ENCODE measurements at regions of chr10 and their contacts with region 1.

Region 1: GRCh38 chr10:61903221-61903927 is 1.9 kb downstream of the ARID5B start:
- DNase-seq: peak; percentile 67 to 78 (median 70)
- H3K4me3 ChIP-seq: peak overlapping the region; percentile 63 to 88
- H3K4me3 Mint-ChIP-seq: peak overlapping the region; percentile 86 to 96 (median 94)
- H3K27ac ChIP-seq: peak overlapping the region; percentile 80
- H3K27ac Mint-ChIP-seq: peak overlapping the region; percentile 84 to 98 (median 97)
- H3K4me1 ChIP-seq: peaks cover 51% of the 10 kb centered on the region
- H3K4me1 Mint-ChIP-seq: peaks cover 28 to 63% (median 40%) of the 10 kb centered on the region in 4 donors
- H3K27me3 ChIP-seq: no peaks in the 10 kb centered on the region
- H3K27me3 Mint-ChIP-seq: no peaks in the 10 kb centered on the region

Region 2: GRCh38 chr10:61662794-61663259 is 240.5 kb before region 1 on chr10 and contains the start of gene CABCOCO1:
- CTCF ChIA-PET with region 1: no interaction called
- POLR2A ChIA-PET with region 1: no interaction called
- intact Hi-C with region 1: no loop called
- DNase-seq: no peak
- H3K4me3 ChIP-seq: no peak within 1 kb of the TSS
- H3K4me3 Mint-ChIP-seq: peak within 1 kb of the TSS in 2 of 8 donors; percentile 8 to 58
- H3K27ac ChIP-seq: no peak within 1 kb of the TSS
- H3K27ac Mint-ChIP-seq: no peak within 1 kb of the TSS
- H3K4me1 ChIP-seq: no peaks in the 10 kb centered on the region
- H3K4me1 Mint-ChIP-seq: peaks cover 0 to 5% (median 0%) of the 10 kb centered on the region in 4 donors
- H3K27me3 ChIP-seq: peaks cover 6% of the 10 kb centered on the region
- H3K27me3 Mint-ChIP-seq: peaks cover 30 to 35% of the 10 kb centered on the region in 2 donors
- total RNA-seq, gene CABCOCO1: not detected

Region 3: DNA sequence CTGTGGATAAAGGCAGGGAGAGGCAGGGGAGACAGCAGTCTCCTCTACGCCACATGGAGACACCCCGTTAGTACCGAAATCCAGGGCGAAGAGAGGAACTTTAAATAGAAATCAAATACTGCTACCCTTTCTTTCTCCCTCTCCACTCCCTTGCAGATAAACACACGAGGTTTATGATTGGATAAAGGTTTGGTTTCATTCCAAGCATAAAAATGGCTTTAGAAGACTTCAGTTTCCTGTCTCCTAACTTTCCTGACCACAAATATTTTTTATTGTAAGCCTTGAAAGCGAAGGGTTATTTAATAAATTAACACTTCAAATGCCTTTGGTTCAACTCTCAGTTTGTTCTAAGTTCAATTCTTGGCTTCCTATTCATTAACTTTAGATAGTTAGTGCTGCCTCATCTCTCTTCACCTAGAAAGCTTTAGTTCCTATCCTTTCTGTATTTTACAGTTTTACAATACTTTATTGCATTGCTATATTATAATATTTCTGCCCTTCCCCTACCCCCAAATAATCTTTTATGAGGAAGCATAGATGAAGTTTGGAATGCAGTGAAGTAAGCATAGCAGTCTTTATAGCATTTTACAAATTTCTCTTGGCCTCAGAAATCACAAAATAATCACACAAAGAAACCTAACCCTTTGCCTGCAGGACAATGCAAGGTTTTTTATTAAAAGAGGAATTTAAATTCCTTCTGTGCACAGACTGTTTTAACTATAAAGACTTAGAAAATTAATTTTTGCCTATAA is 33.4 kb before region 1 on chr10:
- CTCF ChIA-PET with region 1: interaction called, 25 read pairs
- POLR2A ChIA-PET with region 1: interaction called, 21 read pairs
- intact Hi-C with region 1: loop called (anchors 1 kb)
- DNase-seq: no peak
- H3K4me3 ChIP-seq: no peak overlapping the region
- H3K4me3 Mint-ChIP-seq: peak overlapping the region in 1 of 8 donors; percentile 28
- H3K27ac ChIP-seq: no peak overlapping the region
- H3K27ac Mint-ChIP-seq: no peak overlapping the region
- H3K4me1 ChIP-seq: peaks cover 4% of the 10 kb centered on the region
- H3K4me1 Mint-ChIP-seq: peaks cover 0 to 9% (median 3%) of the 10 kb centered on the region in 4 donors
- H3K27me3 ChIP-seq: no peaks in the 10 kb centered on the region
- H3K27me3 Mint-ChIP-seq: no peaks in the 10 kb centered on the region

Region 4: DNA sequence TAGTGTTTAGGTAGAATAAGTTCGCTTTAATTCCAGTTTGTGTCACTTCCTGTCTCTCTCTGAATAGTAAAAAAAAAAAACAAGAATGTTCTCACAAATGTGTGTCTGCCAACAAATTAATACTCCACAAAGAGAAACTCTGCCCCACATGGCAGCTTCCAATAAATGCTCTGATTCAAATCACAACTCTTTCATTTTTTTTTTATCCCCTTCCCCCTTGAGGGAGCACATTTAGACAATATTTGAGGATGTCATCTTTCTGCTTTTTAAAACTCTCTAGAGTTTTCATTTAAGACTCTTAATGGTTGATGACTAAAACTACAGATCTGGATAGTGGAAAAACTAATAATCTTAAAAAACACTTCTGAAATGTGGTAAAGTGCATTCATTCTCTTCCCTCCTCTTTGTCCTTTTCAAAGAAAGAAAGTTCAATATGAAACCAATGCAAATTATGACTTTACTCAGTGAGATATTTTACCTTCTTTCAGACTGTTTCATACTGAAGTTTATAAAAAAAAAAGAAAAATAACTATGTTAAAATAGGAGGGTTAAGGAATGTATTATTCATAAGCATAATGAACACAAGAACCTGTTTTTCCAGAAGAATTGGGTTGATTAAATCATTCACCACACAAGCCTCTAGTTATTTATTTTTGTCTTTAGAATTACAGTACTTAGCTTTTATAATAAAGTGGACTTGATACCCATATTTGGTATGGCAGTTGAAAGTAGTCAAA is 40.5 kb after region 1 on chr10:
- CTCF ChIA-PET with region 1: interaction called, 115 read pairs
- POLR2A ChIA-PET with region 1: interaction called, 175 read pairs
- intact Hi-C with region 1: loop called (anchors 1 kb)
- DNase-seq: peak in 4 of 5 donors; percentile 56 to 68 (median 60)
- H3K4me3 ChIP-seq: peak overlapping the region in 1 of 2 donors; percentile 25
- H3K4me3 Mint-ChIP-seq: peak overlapping the region; percentile 72 to 91 (median 84)
- H3K27ac ChIP-seq: peak overlapping the region; percentile 56
- H3K27ac Mint-ChIP-seq: peak overlapping the region; percentile 89 to 98 (median 95)
- H3K4me1 ChIP-seq: peaks cover 64% of the 10 kb centered on the region
- H3K4me1 Mint-ChIP-seq: peaks cover 35 to 61% (median 48%) of the 10 kb centered on the region in 4 donors
- H3K27me3 ChIP-seq: no peaks in the 10 kb centered on the region
- H3K27me3 Mint-ChIP-seq: no peaks in the 10 kb centered on the region

Region 5: DNA sequence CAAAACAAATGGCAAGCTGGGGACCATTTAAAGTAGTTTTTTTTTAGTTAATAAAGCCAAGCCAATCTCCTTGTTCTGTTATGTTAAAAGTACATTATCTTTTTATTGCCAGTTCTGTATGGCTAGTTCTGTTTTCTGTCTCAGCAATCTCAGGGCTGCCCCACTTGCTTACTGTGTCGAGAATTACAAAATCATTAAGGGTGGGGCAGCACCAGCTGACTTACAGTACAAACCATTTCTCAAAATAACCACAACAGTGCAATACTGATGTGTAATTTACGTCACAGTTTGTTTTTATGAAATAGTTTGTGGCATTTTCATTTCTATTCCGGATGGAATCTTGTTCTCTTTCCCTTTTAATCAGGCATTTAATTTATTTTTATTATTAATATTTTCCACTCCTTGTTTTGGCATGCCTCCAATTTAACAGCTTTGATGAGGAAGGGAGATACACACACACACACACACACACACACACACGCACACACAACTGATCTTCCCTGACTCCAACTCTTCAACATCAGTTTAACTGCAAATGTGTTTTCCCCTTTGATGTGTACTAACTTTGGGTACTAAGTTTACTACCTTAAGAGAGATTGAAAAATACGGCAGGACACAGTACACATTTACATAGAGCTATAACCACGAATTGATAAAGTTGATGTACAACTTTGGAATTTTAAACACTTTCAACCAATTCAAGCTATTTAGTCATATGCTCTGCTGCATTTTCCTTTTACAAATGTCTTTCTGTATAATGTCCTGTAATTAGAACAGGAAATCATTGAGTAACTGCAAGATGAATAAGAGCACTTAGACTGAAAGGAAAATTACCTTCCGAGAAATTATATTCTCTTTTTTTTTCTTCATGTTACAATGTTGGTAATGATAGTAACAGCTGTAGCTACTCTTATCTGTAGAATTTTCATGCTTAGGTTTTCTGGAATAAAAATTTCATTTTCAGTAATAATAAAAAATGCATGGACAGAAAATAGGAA is 89.6 kb after region 1 on chr10:
- CTCF ChIA-PET with region 1: interaction called, 24 read pairs
- POLR2A ChIA-PET with region 1: interaction called, 86 read pairs
- intact Hi-C with region 1: loop called (anchors 1 kb)
- DNase-seq: peak; percentile 79 to 88 (median 84)
- H3K4me3 ChIP-seq: peak overlapping the region; percentile 9 to 39
- H3K4me3 Mint-ChIP-seq: peak overlapping the region; percentile 47 to 81 (median 74)
- H3K27ac ChIP-seq: peak overlapping the region; percentile 60
- H3K27ac Mint-ChIP-seq: peak overlapping the region; percentile 87 to 98 (median 94)
- H3K4me1 ChIP-seq: peaks cover 71% of the 10 kb centered on the region
- H3K4me1 Mint-ChIP-seq: peaks cover 52 to 72% (median 56%) of the 10 kb centered on the region in 4 donors
- H3K27me3 ChIP-seq: no peaks in the 10 kb centered on the region
- H3K27me3 Mint-ChIP-seq: peaks cover 0 to 3% of the 10 kb centered on the region in 2 donors

Region 6: DNA sequence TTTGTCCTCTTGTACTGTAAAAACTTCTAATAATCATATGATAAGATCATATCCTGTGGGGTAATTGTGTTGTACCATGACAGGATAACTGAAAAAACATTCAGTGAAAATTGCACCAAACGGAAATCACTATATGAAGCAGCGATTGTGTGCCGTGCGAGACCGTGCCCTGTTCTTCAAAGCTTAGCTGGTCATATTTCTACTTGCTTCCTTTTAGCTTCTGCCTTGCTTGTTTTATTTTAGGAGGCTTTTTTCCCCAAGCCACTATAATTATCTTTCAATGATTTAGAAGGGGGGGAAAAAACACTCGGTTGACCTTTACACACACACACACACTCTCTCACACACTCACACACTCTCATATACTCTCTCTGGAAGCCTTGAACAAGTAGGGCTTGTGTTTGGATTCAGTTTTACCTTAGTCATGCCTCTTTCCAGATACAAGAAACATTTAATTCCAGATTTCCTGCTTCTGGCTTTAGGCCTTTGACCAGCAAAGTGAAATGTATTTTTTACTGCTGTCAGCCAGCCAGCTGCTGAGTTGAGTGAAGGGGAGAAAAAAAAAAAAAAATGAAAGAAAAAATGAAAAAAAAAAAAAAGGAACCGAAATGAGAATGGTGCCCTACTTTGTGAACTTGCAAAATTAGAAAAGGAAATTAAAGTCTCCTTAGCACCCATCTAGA is 179.5 kb after region 1 on chr10:
- CTCF ChIA-PET with region 1: interaction called, 3 read pairs
- POLR2A ChIA-PET with region 1: interaction called, 15 read pairs
- intact Hi-C with region 1: loop called (anchors 1 kb)
- DNase-seq: peak; percentile 58 to 74 (median 64)
- H3K4me3 ChIP-seq: peak overlapping the region in 1 of 2 donors; percentile 3
- H3K4me3 Mint-ChIP-seq: peak overlapping the region; percentile 58 to 83 (median 73)
- H3K27ac ChIP-seq: peak overlapping the region; percentile 45
- H3K27ac Mint-ChIP-seq: peak overlapping the region; percentile 24 to 95 (median 89)
- H3K4me1 ChIP-seq: peaks cover 79% of the 10 kb centered on the region
- H3K4me1 Mint-ChIP-seq: peaks cover 44 to 77% (median 62%) of the 10 kb centered on the region in 4 donors
- H3K27me3 ChIP-seq: no peaks in the 10 kb centered on the region
- H3K27me3 Mint-ChIP-seq: no peaks in the 10 kb centered on the region

Region 7: DNA sequence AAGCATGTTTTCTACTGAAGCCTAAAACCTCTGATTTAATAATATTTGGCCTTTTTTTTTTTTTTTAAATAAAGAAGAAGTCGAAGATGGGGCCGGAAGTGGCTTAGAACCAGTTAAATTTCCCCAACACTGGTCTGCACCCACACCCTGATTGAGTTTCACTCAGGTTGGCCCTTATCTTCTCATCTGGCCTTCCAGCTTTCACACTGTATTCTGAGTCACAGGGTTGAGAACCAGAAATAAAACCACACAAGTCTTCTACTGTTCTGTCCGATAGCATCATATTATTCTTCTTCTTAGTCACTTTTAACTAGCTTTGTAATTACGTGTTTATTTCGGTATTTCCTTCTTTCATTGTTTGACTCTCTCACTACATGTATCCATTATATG is 480.7 kb after region 1 on chr10:
- CTCF ChIA-PET with region 1: no interaction called
- POLR2A ChIA-PET with region 1: interaction called, 3 read pairs
- intact Hi-C with region 1: loop called (anchors 5 kb)
- DNase-seq: peak; percentile 70 to 90 (median 72)
- H3K4me3 ChIP-seq: peak overlapping the region in 1 of 2 donors; percentile 20
- H3K4me3 Mint-ChIP-seq: peak overlapping the region; percentile 41 to 69 (median 62)
- H3K27ac ChIP-seq: peak overlapping the region; percentile 52
- H3K27ac Mint-ChIP-seq: peak overlapping the region; percentile 70 to 88 (median 81)
- H3K4me1 ChIP-seq: peaks cover 48% of the 10 kb centered on the region
- H3K4me1 Mint-ChIP-seq: peaks cover 42 to 87% (median 57%) of the 10 kb centered on the region in 4 donors
- H3K27me3 ChIP-seq: no peaks in the 10 kb centered on the region
- H3K27me3 Mint-ChIP-seq: no peaks in the 10 kb centered on the region